HEK293T (cell line): ENCODE measurements at regions of chr17 and their contacts with region 1.

Region 1: DNA sequence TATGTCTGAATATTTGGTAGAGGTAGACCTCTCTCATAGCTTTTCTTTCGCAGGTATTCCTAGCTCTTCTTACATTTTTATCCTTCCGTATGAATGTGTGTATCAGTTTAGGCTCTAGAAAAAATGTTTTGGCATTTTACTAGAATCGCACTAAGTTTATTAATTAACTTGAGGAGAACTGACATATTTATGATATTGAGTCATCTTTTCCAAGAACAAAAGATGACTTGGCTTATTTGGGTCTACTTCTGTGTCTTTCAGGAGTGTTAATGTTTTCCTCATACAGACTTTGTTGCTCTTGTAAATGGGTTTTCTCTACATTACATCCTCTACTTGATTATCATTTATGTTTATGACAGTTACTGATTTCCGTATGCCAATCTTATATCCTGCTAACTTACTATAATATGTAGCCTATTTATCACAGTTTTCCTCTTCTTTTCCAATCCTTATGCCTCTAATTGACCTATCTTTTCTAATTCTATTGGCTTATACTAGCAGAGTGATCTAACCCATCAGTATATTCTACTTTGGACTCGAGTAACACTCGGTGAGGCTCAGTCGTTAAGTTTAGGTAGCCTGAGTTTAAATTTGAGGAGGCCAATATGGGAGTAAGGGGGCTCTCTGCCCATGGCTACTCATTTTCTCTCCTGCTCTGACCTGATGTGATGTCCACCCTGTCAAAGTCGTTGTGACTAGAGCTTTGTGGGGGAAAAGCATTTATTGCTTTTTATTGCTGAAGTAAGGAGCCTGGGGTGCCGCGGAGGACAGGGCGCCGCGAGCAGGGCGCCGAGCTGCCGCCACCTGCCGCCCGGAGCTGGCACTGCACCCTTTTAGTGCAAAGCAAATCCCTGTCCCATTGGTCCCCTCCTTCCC is 20.0 kb downstream of the ST6GALNAC1 start:
- DNase-seq: peak; percentile 86

Region 2: GRCh38 chr17:76458580-76459490 is 164.7 kb before region 1 on chr17:
- CTCF ChIA-PET with region 1: no interaction called
- POLR2A ChIA-PET with region 1: no interaction called
- DNase-seq: peak; percentile 46

Region 3: DNA sequence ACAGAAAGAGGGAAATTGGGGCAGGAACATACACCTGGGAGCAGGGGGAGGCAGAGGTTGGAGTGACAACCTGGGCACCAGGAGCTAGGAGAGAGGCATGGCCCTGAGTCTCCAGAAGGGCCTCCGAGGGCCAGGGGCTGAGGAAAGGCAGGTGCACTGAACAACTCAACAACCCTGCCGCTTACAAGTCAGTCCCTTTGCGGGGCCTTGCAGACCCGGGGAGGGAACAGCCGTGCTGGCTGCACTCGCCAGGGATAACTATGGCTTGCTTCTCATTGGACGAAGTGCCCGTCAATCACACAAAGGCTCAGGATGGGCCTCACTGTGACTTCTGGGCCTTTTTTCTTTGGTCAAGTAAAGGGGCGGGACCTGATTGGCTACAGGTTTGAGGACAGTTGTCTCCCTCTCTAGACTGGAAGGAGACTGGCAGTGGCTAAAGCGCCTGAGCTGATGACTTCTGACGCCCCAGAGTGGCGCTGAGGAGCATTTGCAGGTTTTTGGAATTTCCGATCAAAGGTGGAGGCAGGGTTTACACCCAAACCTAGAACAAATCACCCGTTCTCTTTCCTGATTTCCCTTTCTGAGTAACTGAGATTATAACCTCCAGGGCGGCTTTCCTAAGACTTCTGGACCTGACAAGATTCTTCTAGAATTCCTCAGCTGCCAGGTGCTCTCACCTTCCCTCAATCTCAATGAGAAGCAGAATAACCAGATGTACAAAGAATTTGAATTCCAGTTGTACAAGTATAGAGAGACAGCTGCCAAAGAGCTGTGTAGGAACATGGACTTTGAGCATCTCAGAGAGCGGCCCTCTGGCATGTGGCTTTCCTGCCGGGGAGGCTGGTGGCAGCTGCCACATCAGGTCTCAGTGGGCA is 10.3 kb before region 1 on chr17:
- CTCF ChIA-PET with region 1: interaction called, 40 read pairs
- POLR2A ChIA-PET with region 1: no interaction called
- DNase-seq: peak; percentile 91